H1 (cell line): ENCODE measurements at regions of chrX and their contacts with region 1.

Region 1: DNA sequence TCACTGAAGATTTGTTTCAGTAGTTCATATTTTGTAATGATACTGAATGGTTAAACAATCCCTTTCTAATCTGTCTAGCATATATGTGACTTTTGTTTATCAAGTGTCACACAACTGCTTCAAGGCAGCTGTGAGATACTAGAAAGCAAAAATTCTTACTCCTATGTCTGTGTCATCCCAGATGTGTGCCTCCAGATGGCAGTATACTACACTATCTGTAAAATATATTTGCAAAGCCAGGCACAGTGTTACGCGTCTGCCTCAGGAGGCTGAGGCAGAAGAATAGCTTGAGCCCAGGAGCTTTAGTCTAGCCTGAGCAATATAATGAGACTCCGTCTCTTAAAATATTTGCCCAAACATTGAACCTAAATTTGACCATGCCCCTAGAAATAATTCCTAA is 4.0 kb downstream of the NUDT10 start:
- DNase-seq: no peak
- H3K4me3 ChIP-seq: no peak overlapping the region
- H3K27ac ChIP-seq: no peak overlapping the region
- H3K4me1 ChIP-seq: peaks cover 0 to 2% (median 0%) of the 10 kb centered on the region in 4 experiments; a peak in 2 of 7 replicates
- H3K27me3 ChIP-seq: no peaks in the 10 kb centered on the region
- CTCF ChIP-seq: peak in 2 of 3 experiments; percentile 46 to 53; a peak in 3 of 4 replicates
- EP300 ChIP-seq: no peak
- POLR2A ChIP-seq: no peak
- RAD21 ChIP-seq: peak; percentile 64 to 71

Region 2: DNA sequence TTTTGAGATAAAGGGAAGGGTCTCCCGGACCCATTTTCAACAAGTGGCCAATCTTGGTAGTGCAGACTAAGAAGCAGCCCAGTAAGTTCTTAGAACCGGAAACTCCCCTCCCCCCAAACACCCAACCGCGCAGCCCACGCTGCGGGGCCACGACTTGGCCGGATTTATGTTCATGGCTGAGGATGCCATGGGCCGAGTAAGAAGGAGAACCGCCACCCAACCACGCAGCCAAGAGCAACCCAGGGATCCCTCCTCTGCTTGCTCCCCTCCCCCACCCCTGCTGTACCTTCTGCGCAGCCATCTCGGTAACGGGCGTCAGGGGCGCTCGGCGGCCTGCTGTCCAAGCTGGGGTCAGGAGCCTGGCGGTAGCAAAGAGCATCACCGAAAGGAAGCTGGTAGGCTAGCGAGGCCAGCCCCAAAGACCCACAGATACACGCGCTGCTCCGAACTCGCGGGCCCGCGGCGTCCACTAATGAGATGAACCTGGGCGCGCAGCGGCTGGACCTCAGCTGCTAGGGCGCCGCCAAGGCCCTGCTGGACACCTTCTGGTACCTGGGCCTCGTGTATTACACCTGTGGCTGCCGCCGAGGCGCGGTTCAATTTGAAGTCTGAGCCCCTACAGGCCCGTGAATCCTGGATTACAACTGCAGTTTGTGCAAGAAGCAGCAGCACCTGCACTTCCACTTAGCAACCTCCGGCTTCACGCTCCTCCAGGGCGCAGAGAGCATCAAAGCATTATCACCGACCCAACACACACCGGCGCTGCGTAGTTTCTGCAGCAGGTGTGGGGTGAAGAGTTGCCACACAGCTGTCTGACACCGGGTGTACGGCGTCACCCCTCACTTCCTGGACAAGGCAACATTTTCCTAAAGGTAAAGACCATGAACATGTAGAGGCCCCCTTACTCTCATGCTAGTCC is 59.5 kb after region 1 on chrX:
- CTCF ChIA-PET with region 1: interaction called, 10 read pairs
- POLR2A ChIA-PET with region 1: interaction called, 3 read pairs
- DNase-seq: peak in 1 of 2 experiments; percentile 43
- H3K4me3 ChIP-seq: peak overlapping the region; percentile 30 to 59 (median 44); a peak in 7 of 8 replicates
- H3K27ac ChIP-seq: no peak overlapping the region
- H3K4me1 ChIP-seq: peaks cover 0 to 3% (median 0%) of the 10 kb centered on the region in 4 experiments; a peak in 1 of 7 replicates
- H3K27me3 ChIP-seq: no peaks in the 10 kb centered on the region
- CTCF ChIP-seq: peak in 2 of 3 experiments; percentile 2 to 13; a peak in 2 of 4 replicates
- EP300 ChIP-seq: no peak
- POLR2A ChIP-seq: no peak
- RAD21 ChIP-seq: 0 out of 4 replicates have a peak, but pooled peaks of 1 of the 2 experiments have one; percentile 6

Region 3: GRCh38 chrX:51420610-51421009 is 84.0 kb after region 1 on chrX:
- CTCF ChIA-PET with region 1: interaction called, 15 read pairs
- POLR2A ChIA-PET with region 1: interaction called, 6 read pairs
- DNase-seq: no peak
- H3K4me3 ChIP-seq: no peak overlapping the region
- H3K27ac ChIP-seq: no peak overlapping the region
- H3K4me1 ChIP-seq: peaks cover 0 to 3% (median 0%) of the 10 kb centered on the region in 4 experiments; a peak in 2 of 7 replicates
- H3K27me3 ChIP-seq: no peaks in the 10 kb centered on the region
- CTCF ChIP-seq: peak in 2 of 3 experiments; percentile 37 to 56; a peak in 2 of 4 replicates
- EP300 ChIP-seq: no peak
- POLR2A ChIP-seq: no peak
- RAD21 ChIP-seq: peak; percentile 49 to 59

Region 4: DNA sequence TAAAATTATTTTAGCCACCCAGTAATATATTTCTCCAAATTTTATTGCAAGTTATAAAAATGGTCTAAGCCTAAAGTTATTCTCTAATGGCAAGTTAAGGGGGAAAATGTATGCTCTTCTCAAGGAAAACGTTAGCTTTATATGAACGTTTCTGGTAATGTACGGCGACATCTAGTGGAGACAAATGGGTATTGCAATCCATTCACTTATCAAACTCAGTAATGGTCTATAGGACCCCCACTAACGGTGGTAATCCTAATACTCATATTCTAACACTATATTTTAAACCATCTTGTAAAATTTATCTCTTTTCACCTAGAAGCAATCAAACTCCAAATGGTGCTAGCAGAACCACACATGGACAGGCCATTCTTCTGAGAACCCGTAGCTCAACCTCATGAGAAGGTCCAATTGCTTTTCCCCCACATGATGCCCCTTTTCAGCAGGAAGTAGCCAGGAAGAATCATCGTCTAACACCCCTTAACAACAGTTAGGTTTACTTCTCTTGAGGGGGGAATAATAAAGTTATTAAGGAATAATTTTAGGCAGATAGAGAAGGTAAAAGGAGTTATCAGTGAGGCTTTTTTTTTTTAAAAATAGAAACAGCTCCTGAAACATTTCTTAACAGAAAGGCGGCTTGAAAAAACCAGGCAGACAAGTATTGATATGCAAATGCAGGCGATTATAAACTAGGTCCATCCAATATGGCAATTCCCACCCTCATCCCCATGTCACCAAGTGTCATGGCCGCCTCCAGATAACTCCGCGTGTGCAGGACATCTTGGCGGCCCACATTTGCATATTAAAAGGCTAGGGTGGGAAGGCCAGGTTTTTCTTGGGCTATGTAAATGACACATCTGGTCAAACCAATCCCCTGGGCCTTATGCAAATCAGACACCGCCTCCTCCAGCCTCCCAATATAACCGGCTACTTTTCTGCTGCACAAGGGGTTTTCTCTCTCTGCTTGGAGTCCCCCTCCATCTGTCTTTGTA is 124.8 kb after region 1 on chrX:
- CTCF ChIA-PET with region 1: interaction called, 24 read pairs
- POLR2A ChIA-PET with region 1: no interaction called
- DNase-seq: no peak
- H3K4me3 ChIP-seq: no peak overlapping the region
- H3K27ac ChIP-seq: no peak overlapping the region
- H3K4me1 ChIP-seq: peaks cover 0 to 3% (median 0%) of the 10 kb centered on the region in 4 experiments; a peak in 1 of 7 replicates
- H3K27me3 ChIP-seq: no peaks in the 10 kb centered on the region
- CTCF ChIP-seq: peak in 2 of 3 experiments; percentile 27 to 52; a peak in 2 of 4 replicates
- EP300 ChIP-seq: no peak
- POLR2A ChIP-seq: no peak
- RAD21 ChIP-seq: peak; percentile 45 to 49

Region 5: DNA sequence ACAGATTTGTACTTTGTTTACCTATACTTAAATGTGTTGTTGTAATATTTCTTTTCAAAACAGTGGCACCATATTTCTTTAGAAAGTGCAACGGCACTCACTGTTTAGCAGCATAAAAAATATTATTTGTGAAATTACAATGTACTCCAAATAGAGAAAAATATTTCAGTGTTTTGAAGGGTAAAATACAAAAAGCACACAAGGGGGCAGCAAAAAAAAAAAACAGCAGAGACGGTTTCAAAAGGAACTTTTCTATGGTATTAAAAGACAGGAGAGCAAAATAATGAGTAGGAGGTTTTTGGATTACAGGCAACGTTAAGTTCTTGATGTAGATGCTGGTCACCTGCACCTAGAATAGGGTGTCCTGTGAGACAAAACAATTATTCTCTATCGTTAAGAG is 157.8 kb after region 1 on chrX:
- CTCF ChIA-PET with region 1: no interaction called
- POLR2A ChIA-PET with region 1: no interaction called
- DNase-seq: no peak
- H3K4me3 ChIP-seq: peak overlapping the region; percentile 15 to 72 (median 62); a peak in 6 of 8 replicates
- H3K27ac ChIP-seq: no peak overlapping the region
- H3K4me1 ChIP-seq: no peaks in the 10 kb centered on the region; a peak in 1 of 7 replicates
- H3K27me3 ChIP-seq: no peaks in the 10 kb centered on the region
- CTCF ChIP-seq: no peak
- EP300 ChIP-seq: no peak
- POLR2A ChIP-seq: no peak
- RAD21 ChIP-seq: no peak